GM10248 (cell line): ENCODE measurements at regions of chr14 and their contacts with region 1.

Region 1: GRCh38 chr14:59964251-59965007 is 44.5 kb downstream of the LRRC9 start:
- DNase-seq: no peak
- CTCF ChIP-seq: no peak

Region 2: GRCh38 chr14:59787045-59787674 is 177.3 kb before region 1 on chr14:
- CTCF ChIA-PET with region 1: no interaction called
- POLR2A ChIA-PET with region 1: no interaction called
- DNase-seq: no peak
- CTCF ChIP-seq: no peak

Region 3: GRCh38 chr14:59939828-59940227 is 24.6 kb before region 1 on chr14:
- CTCF ChIA-PET with region 1: interaction called, 10 read pairs
- POLR2A ChIA-PET with region 1: no interaction called
- DNase-seq: no peak
- CTCF ChIP-seq: no peak

Region 4: DNA sequence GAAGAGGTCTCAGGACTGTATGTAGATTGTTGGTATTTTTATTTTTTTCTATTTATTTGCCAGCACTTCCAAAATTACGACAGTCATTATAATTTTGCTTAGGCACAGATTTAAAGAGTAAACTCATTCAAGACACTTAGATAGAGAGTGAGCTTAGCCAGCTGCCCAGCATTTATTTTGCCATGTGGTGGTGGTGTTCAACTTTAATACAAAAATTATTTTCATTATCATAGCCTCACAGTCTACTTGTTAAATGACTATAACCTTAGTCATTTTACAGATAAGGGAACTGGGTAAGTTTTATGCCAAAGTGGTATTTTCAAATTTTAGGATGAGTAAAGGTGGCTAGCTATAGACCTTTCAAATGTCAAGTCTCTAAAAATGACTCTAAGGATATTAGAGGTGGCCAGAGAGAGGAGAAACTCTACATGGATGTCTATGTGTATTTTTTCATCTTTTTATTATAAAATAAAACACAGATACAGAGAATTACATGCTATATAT is 22.2 kb after region 1 on chr14:
- CTCF ChIA-PET with region 1: interaction called, 41 read pairs
- POLR2A ChIA-PET with region 1: no interaction called
- DNase-seq: no peak
- CTCF ChIP-seq: no peak

Region 5: GRCh38 chr14:60164712-60165546 is 200.5 kb after region 1 on chr14 and contains the start of gene DHRS7:
- CTCF ChIA-PET with region 1: interaction called, 11 read pairs
- POLR2A ChIA-PET with region 1: no interaction called
- DNase-seq: peak; percentile 88
- CTCF ChIP-seq: peak; percentile 80

Region 6: GRCh38 chr14:60242429-60242828 is 278.0 kb after region 1 on chr14:
- CTCF ChIA-PET with region 1: no interaction called
- POLR2A ChIA-PET with region 1: no interaction called
- DNase-seq: no peak
- CTCF ChIP-seq: no peak

Region 7: DNA sequence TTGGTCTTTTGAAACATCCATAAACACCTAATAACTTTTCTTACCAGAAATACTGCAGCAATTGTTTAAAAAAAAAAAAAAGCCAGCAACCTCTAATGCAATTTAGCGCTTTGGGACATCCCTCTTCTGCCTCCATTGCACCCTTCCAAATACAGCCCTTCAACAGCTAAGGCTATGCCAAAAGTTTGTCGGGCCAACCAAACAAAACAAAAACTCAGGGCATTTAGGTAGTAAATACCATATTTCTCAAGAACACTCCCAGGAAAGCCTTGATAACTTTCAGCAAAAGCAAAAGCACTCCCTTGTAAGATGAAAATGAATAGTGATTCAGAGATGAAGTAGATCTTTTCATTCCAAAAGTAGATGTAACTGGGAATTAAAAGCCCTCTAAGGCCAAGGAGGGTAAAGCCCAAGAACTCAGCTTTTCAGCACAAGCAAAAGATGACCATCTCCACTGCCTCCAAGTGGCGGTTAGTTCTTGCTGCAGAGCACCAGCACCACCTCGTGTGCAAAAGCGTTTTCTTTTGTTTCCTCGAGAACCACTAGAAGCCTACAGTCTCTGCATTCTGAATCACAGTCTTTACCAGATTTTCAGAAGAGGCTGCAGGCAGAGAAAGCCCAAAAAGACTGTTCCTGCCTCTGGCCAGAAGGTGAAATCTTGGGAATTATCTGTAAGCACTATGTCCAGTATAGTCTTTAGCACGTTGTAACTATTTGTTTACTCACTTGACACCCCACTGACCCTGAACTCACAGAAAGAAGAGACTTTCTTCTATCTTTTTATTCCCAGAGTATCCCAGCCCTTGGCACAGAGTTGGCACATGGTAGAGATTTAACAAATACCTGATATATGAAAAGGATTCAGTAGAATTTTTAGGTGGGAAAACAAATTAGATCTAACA is 597.7 kb after region 1 on chr14:
- CTCF ChIA-PET with region 1: interaction called, 19 read pairs
- POLR2A ChIA-PET with region 1: no interaction called
- DNase-seq: peak; percentile 41
- CTCF ChIP-seq: peak; percentile 85